AG04450 (cell line): ENCODE measurements at regions of chr18 and their contacts with region 1.

Region 1: GRCh38 chr18:56575819-56576663 is 62.4 kb downstream of the TXNL1 start:
- DNase-seq: peak; percentile 34
- H3K4me3 ChIP-seq: no peak overlapping the region
- H3K27ac ChIP-seq: no peak overlapping the region
- H3K27me3 ChIP-seq: no peaks in the 10 kb centered on the region
- CTCF ChIP-seq: peak; percentile 70

Region 2: GRCh38 chr18:55781481-55781957 is 794.5 kb before region 1 on chr18:
- CTCF ChIA-PET with region 1: interaction called, 10 read pairs
- POLR2A ChIA-PET with region 1: no interaction called
- DNase-seq: no peak
- H3K4me3 ChIP-seq: no peak overlapping the region
- H3K27ac ChIP-seq: no peak overlapping the region
- H3K27me3 ChIP-seq: no peaks in the 10 kb centered on the region
- CTCF ChIP-seq: peak; percentile 82

Region 3: DNA sequence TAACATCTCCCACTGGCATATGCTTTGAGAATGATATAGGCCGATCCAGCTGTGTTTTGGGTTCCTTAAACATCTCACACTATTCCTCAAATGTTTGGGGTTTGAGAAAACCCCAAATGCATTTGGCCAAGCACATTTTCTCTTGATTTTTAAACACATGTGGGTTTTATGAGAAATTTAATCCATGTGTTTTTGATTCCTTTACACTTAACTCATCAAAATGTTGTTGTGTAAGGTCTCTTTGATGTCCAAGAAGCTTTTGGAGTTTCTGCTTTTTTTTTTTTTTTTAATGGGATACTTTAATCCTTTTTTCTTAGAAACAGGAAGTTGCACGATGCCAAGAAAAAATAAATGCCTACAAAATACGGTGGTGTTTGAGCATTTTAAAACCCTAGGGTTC is 648.2 kb before region 1 on chr18:
- CTCF ChIA-PET with region 1: interaction called, 10 read pairs
- POLR2A ChIA-PET with region 1: no interaction called
- DNase-seq: peak; percentile 81
- H3K4me3 ChIP-seq: no peak overlapping the region
- H3K27ac ChIP-seq: no peak overlapping the region
- H3K27me3 ChIP-seq: no peaks in the 10 kb centered on the region
- CTCF ChIP-seq: no peak

Region 4: DNA sequence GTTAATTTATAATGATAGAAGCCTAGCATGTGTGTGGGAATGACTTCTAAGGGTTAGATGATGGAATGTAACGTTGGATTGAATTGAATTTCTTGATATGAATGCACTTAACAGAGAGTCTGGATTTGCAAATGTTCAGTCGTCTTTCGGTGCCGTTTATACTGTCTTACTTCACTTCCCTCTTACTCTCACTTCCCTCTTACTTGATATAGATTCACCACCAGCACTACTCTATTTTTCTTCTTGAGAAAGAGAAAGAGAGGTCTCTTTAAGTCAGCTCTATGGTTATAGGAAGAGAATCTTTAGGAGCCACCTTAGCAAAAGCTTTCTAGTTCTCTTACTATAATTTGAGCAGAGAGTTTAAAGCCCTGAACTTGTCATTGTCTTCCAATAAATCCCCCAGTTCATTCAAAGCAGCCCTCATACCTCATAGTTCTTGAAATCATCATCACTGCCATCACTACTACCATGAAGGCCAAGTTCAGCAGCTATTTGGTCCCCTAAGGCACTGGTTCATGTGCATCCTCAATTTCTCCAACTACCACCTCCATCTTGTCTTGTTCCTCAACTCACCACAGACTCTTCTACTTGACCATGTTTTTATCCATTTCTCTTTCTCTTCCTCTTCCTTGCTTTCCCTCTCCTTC is 486.3 kb before region 1 on chr18:
- CTCF ChIA-PET with region 1: interaction called, 10 read pairs
- POLR2A ChIA-PET with region 1: no interaction called
- DNase-seq: no peak
- H3K4me3 ChIP-seq: no peak overlapping the region
- H3K27ac ChIP-seq: no peak overlapping the region
- H3K27me3 ChIP-seq: no peaks in the 10 kb centered on the region
- CTCF ChIP-seq: no peak

Region 5: DNA sequence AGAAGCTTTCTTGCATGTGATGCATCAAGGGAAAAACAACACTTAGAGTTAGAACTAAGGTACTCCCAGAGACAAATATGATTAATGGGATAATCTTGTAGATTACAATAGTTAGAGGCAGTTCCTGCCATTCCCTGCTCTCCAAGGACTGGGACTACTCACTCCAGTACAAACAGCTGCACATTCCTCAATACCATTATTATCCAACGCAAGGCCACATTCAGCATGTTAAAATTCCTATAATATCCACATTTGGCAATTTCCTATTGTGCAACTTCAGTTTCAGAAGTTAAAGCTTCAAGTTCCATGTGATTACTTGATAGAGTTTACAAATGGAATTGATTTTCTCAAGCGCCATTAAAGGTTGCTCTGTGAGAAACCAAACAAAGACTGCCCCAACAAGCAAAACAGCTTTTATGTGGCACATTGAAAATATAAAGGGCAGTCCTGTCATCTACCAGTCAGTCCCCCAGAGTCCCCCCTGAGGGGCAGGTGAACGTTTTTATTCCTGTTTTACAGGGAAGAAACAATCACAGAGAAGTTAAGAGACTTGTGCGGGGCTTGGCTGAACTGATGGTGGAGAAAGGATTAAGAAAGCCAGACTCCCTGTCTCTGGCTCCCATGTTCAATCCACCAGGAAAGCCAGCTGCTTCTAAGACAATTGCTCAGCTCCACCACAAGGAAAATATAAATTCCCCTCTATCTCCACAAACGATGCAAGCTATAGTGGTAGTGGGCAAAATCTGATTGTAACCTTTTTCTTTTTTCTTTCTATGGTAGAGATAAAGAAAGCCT is 10.3 kb before region 1 on chr18:
- CTCF ChIA-PET with region 1: interaction called, 18 read pairs
- POLR2A ChIA-PET with region 1: no interaction called
- DNase-seq: peak; percentile 72
- H3K4me3 ChIP-seq: no peak overlapping the region
- H3K27ac ChIP-seq: peak overlapping the region; percentile 40
- H3K27me3 ChIP-seq: no peaks in the 10 kb centered on the region
- CTCF ChIP-seq: no peak

Region 6: GRCh38 chr18:56627991-56628390 is 52.0 kb after region 1 on chr18:
- CTCF ChIA-PET with region 1: no interaction called
- POLR2A ChIA-PET with region 1: no interaction called
- DNase-seq: no peak
- H3K4me3 ChIP-seq: no peak overlapping the region
- H3K27ac ChIP-seq: no peak overlapping the region
- H3K27me3 ChIP-seq: no peaks in the 10 kb centered on the region
- CTCF ChIP-seq: no peak

Region 7: GRCh38 chr18:56678836-56679565 is 103.0 kb after region 1 on chr18:
- CTCF ChIA-PET with region 1: no interaction called
- POLR2A ChIA-PET with region 1: no interaction called
- DNase-seq: no peak
- H3K4me3 ChIP-seq: no peak overlapping the region
- H3K27ac ChIP-seq: no peak overlapping the region
- H3K27me3 ChIP-seq: no peaks in the 10 kb centered on the region
- CTCF ChIP-seq: no peak

Region 8: GRCh38 chr18:56890632-56891031 is 314.6 kb after region 1 on chr18:
- CTCF ChIA-PET with region 1: no interaction called
- POLR2A ChIA-PET with region 1: no interaction called
- DNase-seq: peak; percentile 73
- H3K4me3 ChIP-seq: no peak overlapping the region; the same call in 1 of the 2 replicates
- H3K27ac ChIP-seq: peak overlapping the region; percentile 73
- H3K27me3 ChIP-seq: no peaks in the 10 kb centered on the region
- CTCF ChIP-seq: no peak